CD4-positive, alpha-beta memory T cell (primary cell): ENCODE measurements at regions of chr22 and their contacts with region 1.

Region 1: GRCh38 chr22:36470162-36470993 is 11.1 kb downstream of the TXN2 start:
- DNase-seq: peak; percentile 85 to 87 (median 87)
- H3K4me3 ChIP-seq: no peak overlapping the region
- H3K4me3 Mint-ChIP-seq: no peak overlapping the region
- H3K27ac ChIP-seq: no peak overlapping the region
- H3K27ac Mint-ChIP-seq: peak overlapping the region; percentile 30 to 92 (median 79)
- H3K4me1 ChIP-seq: peaks cover 18% of the 10 kb centered on the region
- H3K4me1 Mint-ChIP-seq: peaks cover 11 to 28% (median 15%) of the 10 kb centered on the region in 4 donors
- H3K27me3 ChIP-seq: no peaks in the 10 kb centered on the region
- H3K27me3 Mint-ChIP-seq: no peaks in the 10 kb centered on the region

Region 2: DNA sequence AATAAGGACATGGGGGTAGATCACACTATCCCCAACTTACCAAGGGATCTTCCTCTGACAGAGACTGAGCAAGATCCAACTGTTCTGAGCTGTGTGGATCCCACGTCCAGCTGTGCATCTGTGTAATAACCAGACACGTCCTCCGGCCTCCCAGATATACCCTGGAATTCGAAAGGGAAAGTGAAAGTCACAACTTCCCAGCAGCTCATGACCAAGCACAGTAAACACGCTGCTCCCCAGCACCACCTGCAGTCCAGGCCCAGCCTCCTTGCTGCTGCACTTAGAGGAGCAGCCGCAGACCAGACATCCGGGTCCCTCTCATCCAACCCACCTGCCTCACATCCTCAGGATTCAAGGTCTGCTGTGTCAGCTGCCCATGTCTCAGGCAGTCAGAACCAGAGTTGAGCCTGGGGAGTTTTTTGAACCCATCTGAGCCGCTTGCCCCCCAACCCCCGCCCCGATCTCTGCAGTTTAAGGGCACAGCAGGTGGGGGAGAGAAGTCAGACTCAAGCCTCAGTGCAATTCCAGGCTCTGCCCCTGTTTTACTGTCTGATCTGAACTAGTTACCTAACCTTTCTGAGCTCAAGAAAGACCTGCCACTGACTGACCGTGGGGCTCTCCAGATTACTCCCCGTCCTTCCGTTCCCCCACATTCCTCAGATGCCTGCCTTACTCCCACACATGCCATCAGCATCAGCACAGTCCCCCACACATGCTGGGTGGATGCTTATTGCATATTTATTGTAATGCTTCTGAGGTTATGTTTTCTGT is 230.8 kb before region 1 on chr22 and contains the start of gene APOL2:
- CTCF ChIA-PET with region 1: interaction called, 10 read pairs
- POLR2A ChIA-PET with region 1: no interaction called
- intact Hi-C with region 1: no loop called
- DNase-seq: peak; percentile 75 to 94 (median 85)
- H3K4me3 ChIP-seq: peak within 1 kb of the TSS; percentile 59 to 76
- H3K4me3 Mint-ChIP-seq: peak within 1 kb of the TSS; percentile 96 to 100 (median 99)
- H3K27ac ChIP-seq: peak within 1 kb of the TSS; percentile 81
- H3K27ac Mint-ChIP-seq: peak within 1 kb of the TSS; percentile 86 to 99 (median 97)
- H3K4me1 ChIP-seq: peaks cover 42% of the 10 kb centered on the region
- H3K4me1 Mint-ChIP-seq: peaks cover 39 to 55% (median 47%) of the 10 kb centered on the region in 4 donors
- H3K27me3 ChIP-seq: no peaks in the 10 kb centered on the region
- H3K27me3 Mint-ChIP-seq: no peaks in the 10 kb centered on the region
- total RNA-seq, gene APOL2: 96.4 to 103 TPM

Region 3: GRCh38 chr22:36331306-36331911 is 139.0 kb before region 1 on chr22:
- CTCF ChIA-PET with region 1: interaction called, 26 read pairs
- POLR2A ChIA-PET with region 1: interaction called, 5 read pairs
- intact Hi-C with region 1: loop called (anchors 1 kb)
- DNase-seq: peak; percentile 69 to 93 (median 78)
- H3K4me3 ChIP-seq: peak overlapping the region; percentile 14 to 53
- H3K4me3 Mint-ChIP-seq: peak overlapping the region; percentile 87 to 94 (median 88)
- H3K27ac ChIP-seq: peak overlapping the region; percentile 84
- H3K27ac Mint-ChIP-seq: peak overlapping the region; percentile 94 to 99 (median 99)
- H3K4me1 ChIP-seq: peaks cover 94% of the 10 kb centered on the region
- H3K4me1 Mint-ChIP-seq: peaks cover 86 to 100% (median 93%) of the 10 kb centered on the region in 4 donors
- H3K27me3 ChIP-seq: no peaks in the 10 kb centered on the region
- H3K27me3 Mint-ChIP-seq: no peaks in the 10 kb centered on the region

Region 4: GRCh38 chr22:36379593-36380361 is 90.6 kb before region 1 on chr22:
- CTCF ChIA-PET with region 1: interaction called, 13 read pairs
- POLR2A ChIA-PET with region 1: interaction called, 13 read pairs
- intact Hi-C with region 1: no loop called
- DNase-seq: peak; percentile 58 to 80 (median 67)
- H3K4me3 ChIP-seq: peak overlapping the region; percentile 45 to 55
- H3K4me3 Mint-ChIP-seq: peak overlapping the region; percentile 75 to 92 (median 84)
- H3K27ac ChIP-seq: peak overlapping the region; percentile 70
- H3K27ac Mint-ChIP-seq: peak overlapping the region; percentile 92 to 99 (median 98)
- H3K4me1 ChIP-seq: peaks cover 96% of the 10 kb centered on the region
- H3K4me1 Mint-ChIP-seq: peaks cover 54 to 97% (median 77%) of the 10 kb centered on the region in 4 donors
- H3K27me3 ChIP-seq: no peaks in the 10 kb centered on the region
- H3K27me3 Mint-ChIP-seq: no peaks in the 10 kb centered on the region

Region 5: DNA sequence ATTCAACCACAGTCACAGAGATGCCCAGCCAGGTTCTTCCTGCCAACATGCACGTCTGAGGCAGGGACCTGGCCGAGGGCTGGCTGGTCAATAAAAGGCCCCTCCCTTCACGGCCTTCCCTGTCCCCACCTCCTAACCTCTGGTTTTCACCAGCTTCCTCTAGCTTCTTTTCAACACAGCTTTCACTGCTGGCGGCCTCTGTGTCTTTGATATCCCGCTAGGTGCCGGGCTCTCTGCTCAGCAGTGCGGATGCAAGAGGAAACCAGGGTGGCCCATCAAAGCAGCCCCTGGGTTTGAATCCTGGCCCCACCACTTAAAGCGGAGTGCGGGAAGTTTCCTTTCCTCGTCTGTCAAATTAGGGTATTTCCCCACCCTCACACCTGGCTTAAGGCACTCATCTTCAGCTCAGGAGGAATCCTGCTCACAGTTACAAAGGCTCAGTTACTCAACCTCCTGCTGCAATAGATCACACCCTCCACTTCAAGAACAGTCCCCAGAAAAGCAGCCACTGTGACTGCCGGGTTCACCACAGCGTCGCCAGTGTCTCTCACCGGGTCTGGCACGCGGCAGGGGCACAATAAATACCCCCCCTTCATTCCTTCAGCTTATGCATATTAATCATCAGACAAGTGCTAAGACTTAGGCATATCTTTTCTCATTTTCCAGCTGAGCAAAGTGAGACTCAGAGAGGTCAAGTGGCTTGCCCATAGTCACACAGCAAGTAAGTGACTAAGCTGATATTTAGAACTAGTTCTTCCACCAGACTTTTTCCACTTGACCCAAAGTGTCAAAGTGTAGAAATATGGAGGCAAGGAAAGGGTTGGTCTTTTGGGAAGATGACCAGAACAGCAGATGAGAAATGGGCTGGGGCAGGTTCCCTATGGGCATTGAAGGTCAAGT is 34.6 kb before region 1 on chr22:
- CTCF ChIA-PET with region 1: interaction called, 14 read pairs
- POLR2A ChIA-PET with region 1: no interaction called
- intact Hi-C with region 1: no loop called
- DNase-seq: peak; percentile 68 to 92 (median 76)
- H3K4me3 ChIP-seq: no peak overlapping the region
- H3K4me3 Mint-ChIP-seq: peak overlapping the region in 7 of 8 donors; percentile 60 to 84 (median 73)
- H3K27ac ChIP-seq: peak overlapping the region; percentile 57
- H3K27ac Mint-ChIP-seq: peak overlapping the region; percentile 82 to 97 (median 93)
- H3K4me1 ChIP-seq: peaks cover 29% of the 10 kb centered on the region
- H3K4me1 Mint-ChIP-seq: peaks cover 16 to 36% (median 25%) of the 10 kb centered on the region in 4 donors
- H3K27me3 ChIP-seq: no peaks in the 10 kb centered on the region
- H3K27me3 Mint-ChIP-seq: no peaks in the 10 kb centered on the region

Region 6: DNA sequence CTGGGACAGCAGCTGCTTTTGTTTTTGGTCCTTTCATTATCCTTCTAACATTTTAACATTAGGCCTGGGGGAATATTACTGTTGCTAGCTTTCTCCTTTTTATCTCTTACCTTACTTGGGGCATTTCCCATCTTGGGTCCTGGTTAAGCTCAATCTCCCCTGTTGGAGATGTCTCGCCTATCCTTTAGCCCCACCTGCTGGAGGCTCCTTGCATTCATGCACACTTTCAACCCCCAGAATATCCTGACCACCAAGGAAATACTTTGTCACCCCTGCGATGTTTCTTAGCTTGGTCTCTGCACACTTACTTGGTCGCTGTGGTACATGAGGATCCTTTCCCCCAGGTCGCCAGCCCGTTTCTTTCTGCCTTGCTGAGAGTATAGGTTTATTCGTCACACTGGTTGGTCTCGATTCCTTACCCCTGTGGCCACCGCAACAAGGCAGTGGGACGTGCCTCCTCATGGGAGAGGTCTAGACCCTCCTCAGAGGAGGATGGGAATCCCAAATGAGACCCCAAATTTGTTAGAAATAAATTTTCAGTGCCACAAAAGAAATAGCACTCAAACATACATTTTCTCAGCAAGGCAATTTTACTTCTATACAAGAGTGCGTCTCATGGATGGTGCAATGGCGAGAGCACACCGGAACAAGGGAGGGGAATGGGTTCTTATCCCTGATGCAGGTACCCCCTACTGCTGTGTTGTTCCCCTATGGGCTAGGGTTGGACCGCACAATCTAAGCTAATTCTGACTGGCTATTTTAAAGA is 16.4 kb after region 1 on chr22:
- CTCF ChIA-PET with region 1: interaction called, 16 read pairs
- POLR2A ChIA-PET with region 1: interaction called, 9 read pairs
- intact Hi-C with region 1: no loop called
- DNase-seq: peak; percentile 61 to 72 (median 63)
- H3K4me3 ChIP-seq: no peak overlapping the region
- H3K4me3 Mint-ChIP-seq: no peak overlapping the region
- H3K27ac ChIP-seq: no peak overlapping the region
- H3K27ac Mint-ChIP-seq: peak overlapping the region in 3 of 7 donors; percentile 43 to 65 (median 64)
- H3K4me1 ChIP-seq: peaks cover 5% of the 10 kb centered on the region
- H3K4me1 Mint-ChIP-seq: peaks cover 4 to 12% (median 5%) of the 10 kb centered on the region in 4 donors
- H3K27me3 ChIP-seq: no peaks in the 10 kb centered on the region
- H3K27me3 Mint-ChIP-seq: no peaks in the 10 kb centered on the region

Region 7: GRCh38 chr22:36569999-36570398 is 99.6 kb after region 1 on chr22:
- CTCF ChIA-PET with region 1: no interaction called
- POLR2A ChIA-PET with region 1: no interaction called
- intact Hi-C with region 1: no loop called
- DNase-seq: no peak
- H3K4me3 ChIP-seq: no peak overlapping the region
- H3K4me3 Mint-ChIP-seq: no peak overlapping the region
- H3K27ac ChIP-seq: no peak overlapping the region
- H3K27ac Mint-ChIP-seq: no peak overlapping the region
- H3K4me1 ChIP-seq: no peaks in the 10 kb centered on the region
- H3K4me1 Mint-ChIP-seq: no peaks in the 10 kb centered on the region
- H3K27me3 ChIP-seq: no peaks in the 10 kb centered on the region
- H3K27me3 Mint-ChIP-seq: peaks cover 11 to 24% of the 10 kb centered on the region in 2 donors

Region 8: DNA sequence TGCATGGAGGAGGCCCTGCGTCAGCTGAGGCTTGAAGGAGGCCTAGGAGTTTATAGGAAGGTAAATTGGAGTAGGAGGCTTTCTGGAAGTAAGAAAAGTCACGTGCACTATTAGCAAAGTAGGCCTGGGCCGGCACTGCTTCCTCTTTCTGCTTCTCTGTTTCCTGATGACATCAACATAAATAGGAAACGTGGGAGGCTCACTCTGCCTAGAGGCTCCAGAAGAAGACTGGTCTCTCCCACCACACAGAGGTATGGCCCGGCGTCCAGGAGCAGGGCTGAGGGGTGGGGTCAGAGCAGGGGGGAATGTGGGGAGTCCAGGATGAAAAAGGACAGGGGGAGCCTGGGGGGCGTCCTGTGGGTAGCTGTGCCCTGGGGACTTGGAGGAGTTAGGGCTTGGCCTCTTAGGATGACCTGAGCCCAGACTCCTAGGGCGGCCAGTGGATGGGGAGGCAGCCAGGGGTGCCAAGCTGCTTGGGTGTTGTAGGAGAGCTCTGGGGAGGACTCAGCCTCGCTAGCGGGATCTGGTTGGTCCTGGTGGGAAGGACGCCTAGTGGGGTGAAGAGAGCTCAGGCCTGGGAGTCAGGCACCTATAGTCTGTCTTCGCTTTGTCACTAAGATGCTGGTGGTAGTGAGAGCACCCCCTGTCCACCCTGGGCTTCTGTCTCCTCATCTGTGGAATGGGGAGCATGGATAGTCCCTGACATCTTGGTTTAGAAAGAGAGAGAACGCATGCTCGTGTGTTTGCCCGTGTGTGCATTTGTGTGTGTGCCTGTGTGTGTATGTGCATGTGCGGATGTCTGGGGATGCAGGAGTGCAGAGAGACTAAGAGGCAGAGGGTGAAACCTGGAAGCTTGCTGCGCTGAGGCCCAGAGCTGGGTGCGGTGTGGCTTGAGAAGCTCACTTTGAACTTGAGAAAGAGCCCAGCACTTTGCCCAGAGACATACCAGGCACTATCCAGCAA is 443.3 kb after region 1 on chr22 and contains the start of gene CSF2RB:
- CTCF ChIA-PET with region 1: no interaction called
- POLR2A ChIA-PET with region 1: no interaction called
- intact Hi-C with region 1: no loop called
- DNase-seq: no peak
- H3K4me3 ChIP-seq: no peak within 1 kb of the TSS
- H3K4me3 Mint-ChIP-seq: peak within 1 kb of the TSS in 1 of 8 donors; percentile 42
- H3K27ac ChIP-seq: no peak within 1 kb of the TSS
- H3K27ac Mint-ChIP-seq: peak within 1 kb of the TSS in 1 of 7 donors; percentile 24
- H3K4me1 ChIP-seq: no peaks in the 10 kb centered on the region
- H3K4me1 Mint-ChIP-seq: peaks cover 0 to 4% (median 0%) of the 10 kb centered on the region in 4 donors
- H3K27me3 ChIP-seq: no peaks in the 10 kb centered on the region
- H3K27me3 Mint-ChIP-seq: peaks cover 5 to 16% of the 10 kb centered on the region in 2 donors
- total RNA-seq, gene CSF2RB: 1.2 TPM